Calu3 (cell line): ENCODE measurements at regions of chr5 and their contacts with region 1.

Region 1: GRCh38 chr5:57366744-57367143 is 115.9 kb downstream of the ACTBL2 start:
- DNase-seq: peak; percentile 51
- H3K4me3 Mint-ChIP-seq: no peak overlapping the region
- H3K27ac Mint-ChIP-seq: no peak overlapping the region
- H3K4me1 Mint-ChIP-seq: peaks cover 22% of the 10 kb centered on the region
- H3K27me3 Mint-ChIP-seq: no peaks in the 10 kb centered on the region
- CTCF ChIP-seq: no peak

Region 2: DNA sequence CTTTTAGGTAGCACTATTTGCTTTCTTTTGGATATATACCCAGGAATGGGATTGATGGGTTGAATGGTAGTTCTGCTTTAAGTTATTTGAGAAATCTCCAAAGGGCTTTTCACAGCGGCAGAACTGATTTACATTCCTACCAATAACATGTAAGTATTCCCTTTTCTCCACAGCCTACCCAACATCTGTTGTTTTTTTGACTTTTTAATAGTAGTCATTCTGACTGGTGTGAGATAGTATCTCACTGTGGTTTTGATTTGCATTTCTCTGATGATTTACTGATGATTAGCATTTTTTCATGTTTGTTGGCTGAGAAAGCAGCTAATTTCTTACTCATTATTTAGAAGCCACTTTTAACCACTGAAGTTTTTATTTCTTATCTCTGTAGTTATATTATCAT is 337.0 kb after region 1 on chr5:
- CTCF ChIA-PET with region 1: no interaction called
- intact Hi-C with region 1: loop called (anchors 10 kb)
- DNase-seq: no peak
- H3K4me3 Mint-ChIP-seq: no peak overlapping the region
- H3K27ac Mint-ChIP-seq: no peak overlapping the region
- H3K4me1 Mint-ChIP-seq: peaks cover 18% of the 10 kb centered on the region
- H3K27me3 Mint-ChIP-seq: no peaks in the 10 kb centered on the region
- CTCF ChIP-seq: no peak